ENCODE measurements at regions of chr10 and their contacts with region 1.

Region 1: GRCh38 chr10:90751107-90751997 is 106.5 kb downstream of the HTR7 start:
- DNase-seq: peak; percentile 45
- ATAC-seq: peak; percentile 99
- H3K4me3 ChIP-seq: no peak overlapping the region
- H3K27ac ChIP-seq: no peak overlapping the region
- H3K4me1 ChIP-seq: 0 out of 4 replicates have a peak, but pooled peaks cover 0 to 6% of the 10 kb centered on the region in 2 experiments
- H3K27me3 ChIP-seq: no peaks in the 10 kb centered on the region
- CTCF ChIP-seq: peak; percentile 73 to 91 (median 80)
- POLR2A ChIP-seq: no peak
- RAD21 ChIP-seq: peak; percentile 90

Region 2: GRCh38 chr10:90787393-90788198 is 36.2 kb after region 1 on chr10:
- CTCF ChIA-PET with region 1: interaction called, 12 read pairs
- POLR2A ChIA-PET with region 1: no interaction called
- RAD21 ChIA-PET with region 1: no interaction called
- intact Hi-C with region 1: loop called (anchors 1 kb)
- DNase-seq: peak; percentile 27
- ATAC-seq: peak; percentile 86
- H3K4me3 ChIP-seq: no peak overlapping the region
- H3K27ac ChIP-seq: no peak overlapping the region
- H3K4me1 ChIP-seq: no peaks in the 10 kb centered on the region
- H3K27me3 ChIP-seq: no peaks in the 10 kb centered on the region
- CTCF ChIP-seq: peak; percentile 48 to 89 (median 88); a peak in 5 of 6 replicates
- POLR2A ChIP-seq: no peak
- RAD21 ChIP-seq: peak; percentile 72

Region 3: GRCh38 chr10:90920986-90921666 is 169.8 kb after region 1 on chr10 and contains the start of gene ANKRD1:
- CTCF ChIA-PET with region 1: no interaction called
- POLR2A ChIA-PET with region 1: no interaction called
- RAD21 ChIA-PET with region 1: no interaction called
- intact Hi-C with region 1: no loop called
- DNase-seq: peak; percentile 60
- ATAC-seq: peak; percentile 96
- H3K4me3 ChIP-seq: no peak within 1 kb of the TSS
- H3K27ac ChIP-seq: no peak within 1 kb of the TSS
- H3K4me1 ChIP-seq: peaks cover 9 to 12% of the 10 kb centered on the region in 2 experiments
- H3K27me3 ChIP-seq: no peaks in the 10 kb centered on the region
- CTCF ChIP-seq: no peak
- POLR2A ChIP-seq: no peak
- RAD21 ChIP-seq: no peak
- total RNA-seq, gene ANKRD1: not detected